ENCODE measurements at regions of chr2 and their contacts with region 1.

Region 1: DNA sequence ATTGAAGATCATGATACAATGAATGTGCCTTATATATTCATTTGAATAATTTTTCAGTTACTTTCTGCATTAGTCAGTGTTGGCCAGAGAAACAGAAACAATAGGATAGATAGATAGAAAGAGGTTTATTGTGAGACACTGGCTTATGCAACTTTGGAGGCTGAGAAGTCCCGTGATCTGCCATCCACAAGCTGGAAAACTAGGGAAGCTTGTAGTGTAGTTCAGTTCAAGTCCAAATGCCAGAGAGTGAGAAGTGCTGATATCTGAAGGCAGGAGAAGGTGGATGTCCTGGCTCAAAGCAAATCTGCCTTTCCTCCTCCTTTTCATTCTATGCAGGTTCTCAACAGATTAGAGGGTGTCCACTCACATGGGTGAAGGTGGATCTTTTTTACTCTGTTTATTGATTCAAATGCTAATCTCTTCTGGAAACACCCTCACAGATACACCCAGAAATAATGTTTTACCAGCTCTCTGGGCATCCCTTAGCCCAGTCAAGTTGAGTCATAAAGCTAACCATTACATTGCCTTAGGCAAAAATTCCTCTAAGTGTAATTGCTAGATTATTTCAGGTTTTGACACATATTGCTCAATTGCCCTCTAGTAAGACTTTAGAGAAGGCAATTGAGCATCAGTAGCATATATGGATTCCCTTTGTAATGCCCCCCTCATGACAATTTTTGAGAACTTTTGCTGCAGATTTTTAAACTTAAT is 341.4 kb downstream of the LPIN1 start:
- DNase-seq: peak; percentile 1 to 94
- H3K4me3 ChIP-seq: no peak overlapping the region
- H3K27ac ChIP-seq: peak overlapping the region; percentile 60
- H3K4me1 ChIP-seq: peaks cover 30% of the 10 kb centered on the region
- H3K27me3 ChIP-seq: no peaks in the 10 kb centered on the region
- CTCF ChIP-seq: no peak

Region 2: DNA sequence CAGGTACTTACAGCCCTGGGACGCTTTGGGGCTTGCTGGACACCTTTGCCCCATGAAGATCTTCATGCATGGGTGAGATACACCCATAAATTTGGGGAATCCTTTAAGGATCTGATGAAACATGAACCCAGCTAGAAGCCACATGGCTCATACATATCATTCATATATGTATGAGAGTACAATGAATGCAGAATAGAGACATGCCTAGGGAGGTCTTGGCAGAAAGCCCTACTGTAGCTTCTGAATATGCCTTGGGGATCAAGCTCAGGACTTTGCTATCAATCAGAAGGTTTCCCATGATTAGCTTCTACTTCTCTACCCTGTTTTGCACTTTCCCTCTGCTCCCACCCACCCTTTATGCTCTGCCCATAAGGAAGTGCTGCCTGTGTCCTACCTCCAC is 27.0 kb after region 1 on chr2:
- CTCF ChIA-PET with region 1: no interaction called
- POLR2A ChIA-PET with region 1: interaction called, 12 read pairs
- intact Hi-C with region 1: no loop called
- DNase-seq: no peak
- H3K4me3 ChIP-seq: no peak overlapping the region
- H3K27ac ChIP-seq: no peak overlapping the region
- H3K4me1 ChIP-seq: peaks cover 10% of the 10 kb centered on the region
- H3K27me3 ChIP-seq: no peaks in the 10 kb centered on the region
- CTCF ChIP-seq: no peak

Region 3: DNA sequence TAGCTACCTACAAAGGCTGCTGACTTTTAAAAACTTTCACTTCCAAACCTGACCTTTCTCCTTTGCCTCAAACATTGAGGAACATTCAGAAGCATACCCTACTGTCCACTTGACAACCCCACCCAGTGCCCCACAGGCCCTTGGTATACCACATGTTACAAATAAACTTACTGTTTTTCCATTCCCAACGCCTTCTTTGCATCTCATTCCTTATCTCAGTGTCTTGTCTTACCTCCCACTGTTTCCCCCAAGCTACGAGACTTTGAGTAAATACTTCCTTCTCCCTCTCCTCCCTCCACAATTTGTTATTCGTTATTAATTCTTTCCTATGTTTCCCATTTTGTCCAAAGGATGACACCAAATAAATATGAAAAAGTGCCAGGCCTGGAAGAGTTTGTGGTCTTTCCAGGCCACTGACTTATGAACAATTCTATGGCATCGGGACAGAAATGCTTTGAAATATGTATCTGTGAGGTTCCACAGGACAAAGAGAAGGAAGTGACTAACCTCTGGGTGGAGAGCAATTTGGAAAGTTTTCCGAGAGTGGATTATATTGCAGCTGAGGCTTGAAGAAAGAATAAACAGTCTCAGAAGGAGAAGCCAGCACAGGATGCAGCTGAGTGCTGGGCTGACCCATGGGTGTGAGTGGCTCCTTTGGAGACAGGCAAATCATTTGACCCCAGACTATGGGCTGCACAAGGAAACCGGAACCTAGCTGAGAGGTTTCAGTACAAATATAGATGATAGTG is 67.7 kb after region 1 on chr2:
- CTCF ChIA-PET with region 1: no interaction called
- POLR2A ChIA-PET with region 1: no interaction called
- intact Hi-C with region 1: no loop called
- DNase-seq: peak; percentile 58 to 86
- H3K4me3 ChIP-seq: no peak overlapping the region
- H3K27ac ChIP-seq: peak overlapping the region; percentile 79
- H3K4me1 ChIP-seq: peaks cover 36% of the 10 kb centered on the region
- H3K27me3 ChIP-seq: no peaks in the 10 kb centered on the region
- CTCF ChIP-seq: no peak

Region 4: GRCh38 chr2:12282780-12283695 is 195.2 kb after region 1 on chr2:
- CTCF ChIA-PET with region 1: no interaction called
- POLR2A ChIA-PET with region 1: no interaction called
- intact Hi-C with region 1: no loop called
- DNase-seq: no peak
- H3K4me3 ChIP-seq: no peak overlapping the region
- H3K27ac ChIP-seq: no peak overlapping the region
- H3K4me1 ChIP-seq: peaks cover 42% of the 10 kb centered on the region
- H3K27me3 ChIP-seq: no peaks in the 10 kb centered on the region
- CTCF ChIP-seq: no peak

Region 5: GRCh38 chr2:12320027-12320734 is 232.4 kb after region 1 on chr2:
- CTCF ChIA-PET with region 1: no interaction called
- POLR2A ChIA-PET with region 1: no interaction called
- intact Hi-C with region 1: no loop called
- DNase-seq: no peak
- H3K4me3 ChIP-seq: no peak overlapping the region
- H3K27ac ChIP-seq: peak overlapping the region; percentile 92; the same call in 1 of the 2 replicates
- H3K4me1 ChIP-seq: peaks cover 44% of the 10 kb centered on the region
- H3K27me3 ChIP-seq: no peaks in the 10 kb centered on the region
- CTCF ChIP-seq: no peak

Region 6: DNA sequence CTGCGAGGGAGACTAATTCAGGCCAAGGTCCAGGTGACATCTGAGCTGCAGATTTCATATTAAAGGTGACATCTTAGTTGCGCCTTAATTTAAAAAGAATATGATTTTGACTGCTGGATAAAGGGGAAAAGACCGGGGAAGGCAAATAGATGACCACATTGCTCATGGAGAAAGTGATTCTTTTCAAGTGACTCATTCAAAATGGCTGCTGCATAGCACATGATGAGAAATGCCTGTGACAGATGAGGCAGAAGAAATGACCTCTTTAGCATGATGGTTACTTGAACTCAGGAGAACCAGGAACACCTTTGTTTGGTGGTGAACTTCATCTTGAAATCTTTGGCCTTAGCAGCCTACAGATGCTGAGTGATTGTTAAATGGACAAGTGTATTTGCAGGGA is 243.1 kb after region 1 on chr2:
- CTCF ChIA-PET with region 1: no interaction called
- POLR2A ChIA-PET with region 1: interaction called, 11 read pairs
- intact Hi-C with region 1: no loop called
- DNase-seq: peak; percentile 6 to 74
- H3K4me3 ChIP-seq: no peak overlapping the region
- H3K27ac ChIP-seq: no peak overlapping the region
- H3K4me1 ChIP-seq: 0 out of 2 replicates have a peak, but pooled peaks cover 3% of the 10 kb centered on the region
- H3K27me3 ChIP-seq: no peaks in the 10 kb centered on the region
- CTCF ChIP-seq: no peak

Measured in PC-9 (cell line).